Heart right ventricle (tissue), 16 donors: ENCODE measurements at regions of chr4 and their contacts with region 1.

Region 1: DNA sequence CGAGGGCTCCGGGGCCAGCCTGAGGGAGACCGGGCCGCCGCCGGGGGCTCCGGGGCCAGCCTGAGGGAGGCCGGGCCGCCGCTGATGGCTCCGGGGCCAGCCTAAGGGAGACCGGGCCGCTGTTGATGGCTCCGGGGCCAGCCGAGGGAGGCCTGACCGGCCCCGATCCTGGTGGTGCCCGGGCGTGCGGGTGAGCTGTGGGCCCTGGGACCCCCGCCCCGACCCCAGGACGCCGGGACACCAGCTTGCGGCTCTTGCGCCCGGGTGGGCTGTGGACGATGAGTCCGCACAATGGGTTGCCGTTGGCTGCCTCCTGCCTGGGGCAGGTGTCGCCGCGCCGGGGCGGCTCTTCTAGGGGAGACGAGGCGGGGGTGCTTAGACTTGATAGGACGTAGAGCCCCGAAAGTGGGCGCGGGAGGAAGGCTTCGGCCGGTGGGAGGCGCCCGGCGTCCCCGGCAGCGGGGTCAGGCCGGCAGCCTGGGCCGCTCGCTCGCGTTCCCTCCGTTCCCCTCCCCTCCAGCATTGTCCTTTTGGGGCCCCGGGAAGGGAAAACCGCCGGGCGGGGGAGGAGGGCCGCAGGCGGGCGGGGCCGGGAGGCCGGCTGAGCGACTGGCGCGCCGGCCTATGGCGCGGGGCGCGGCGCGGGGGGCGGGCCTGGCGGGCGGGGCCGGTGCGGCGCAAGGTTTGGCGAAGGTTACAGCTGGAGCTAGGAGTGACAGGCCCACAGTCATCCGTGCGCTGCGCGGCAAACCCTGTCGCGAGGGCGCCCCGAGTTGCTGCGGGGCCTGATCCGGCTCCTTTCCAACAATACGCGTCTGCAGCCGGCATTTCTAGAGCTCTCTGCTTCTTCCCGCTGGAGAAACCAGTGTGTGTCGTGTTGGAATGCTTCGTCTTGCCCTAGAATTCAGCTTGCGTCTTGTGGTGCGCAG is 790 bp downstream of the KIAA0232 start:
- DNase-seq: peak; percentile 91 to 92
- ATAC-seq: peak; percentile 86 to 90 (median 90)
- H3K4me3 ChIP-seq: peak overlapping the region; percentile 89 to 100 (median 98)
- H3K27ac ChIP-seq: peak overlapping the region; percentile 92 to 100 (median 100)
- H3K4me1 ChIP-seq: peaks cover 7 to 62% (median 55%) of the 10 kb centered on the region in 9 donors
- H3K27me3 ChIP-seq: no peaks in the 10 kb centered on the region
- CTCF ChIP-seq: peak in 6 of 9 donors; percentile 18 to 56 (median 43)

Region 2: GRCh38 chr4:6640292-6641163 is 142.8 kb before region 1 on chr4 and contains the start of gene MRFAP1:
- intact Hi-C with region 1: loop called in 1 of 10 experiments (anchors 2 kb)
- DNase-seq: peak; percentile 94 to 96
- ATAC-seq: peak; percentile 92 to 97 (median 96)
- H3K4me3 ChIP-seq: peak within 1 kb of the TSS; percentile 74 to 96 (median 86)
- H3K27ac ChIP-seq: peak within 1 kb of the TSS; percentile 86 to 93 (median 90)
- H3K4me1 ChIP-seq: peaks cover 14 to 40% (median 34%) of the 10 kb centered on the region in 9 donors
- H3K27me3 ChIP-seq: no peaks in the 10 kb centered on the region
- CTCF ChIP-seq: no peak
- total RNA-seq, gene MRFAP1: 222 to 268 (median 248) TPM

Region 3: GRCh38 chr4:6855692-6856297 is 72.5 kb after region 1 on chr4:
- intact Hi-C with region 1: loop called in 3 of 10 experiments (anchors 1 to 5 kb)
- DNase-seq: no peak
- ATAC-seq: peak; percentile 65 to 90 (median 81)
- H3K4me3 ChIP-seq: peak overlapping the region in 5 of 10 donors; percentile 2 to 23 (median 12)
- H3K27ac ChIP-seq: peak overlapping the region; percentile 23 to 82 (median 77)
- H3K4me1 ChIP-seq: peaks cover 0 to 51% (median 30%) of the 10 kb centered on the region in 9 donors
- H3K27me3 ChIP-seq: no peaks in the 10 kb centered on the region
- CTCF ChIP-seq: no peak

Region 4: GRCh38 chr4:6873792-6874461 is 90.6 kb after region 1 on chr4:
- intact Hi-C with region 1: loop called in 8 of 10 experiments (anchors 2 to 10 kb)
- DNase-seq: peak; percentile 60 to 74
- ATAC-seq: peak; percentile 40 to 83 (median 72)
- H3K4me3 ChIP-seq: no peak overlapping the region
- H3K27ac ChIP-seq: peak overlapping the region in 1 of 10 donors; percentile 2
- H3K4me1 ChIP-seq: peaks cover 3 to 57% (median 32%) of the 10 kb centered on the region in 9 donors
- H3K27me3 ChIP-seq: no peaks in the 10 kb centered on the region
- CTCF ChIP-seq: peak; percentile 56 to 90 (median 87)

Region 5: GRCh38 chr4:7081891-7082471 is 298.7 kb after region 1 on chr4:
- intact Hi-C with region 1: loop called in 1 of 10 experiments (anchors 5 kb)
- DNase-seq: peak; percentile 55
- ATAC-seq: peak in 7 of 8 donors; percentile 67 to 94 (median 86)
- H3K4me3 ChIP-seq: no peak overlapping the region
- H3K27ac ChIP-seq: no peak overlapping the region
- H3K4me1 ChIP-seq: peaks cover 0 to 8% (median 0%) of the 10 kb centered on the region in 9 donors
- H3K27me3 ChIP-seq: peaks cover 0 to 54% (median 7%) of the 10 kb centered on the region in 7 donors
- CTCF ChIP-seq: peak in 8 of 9 donors; percentile 21 to 63 (median 54)